ENCODE measurements at regions of chr3 and their contacts with region 1.

Region 1: DNA sequence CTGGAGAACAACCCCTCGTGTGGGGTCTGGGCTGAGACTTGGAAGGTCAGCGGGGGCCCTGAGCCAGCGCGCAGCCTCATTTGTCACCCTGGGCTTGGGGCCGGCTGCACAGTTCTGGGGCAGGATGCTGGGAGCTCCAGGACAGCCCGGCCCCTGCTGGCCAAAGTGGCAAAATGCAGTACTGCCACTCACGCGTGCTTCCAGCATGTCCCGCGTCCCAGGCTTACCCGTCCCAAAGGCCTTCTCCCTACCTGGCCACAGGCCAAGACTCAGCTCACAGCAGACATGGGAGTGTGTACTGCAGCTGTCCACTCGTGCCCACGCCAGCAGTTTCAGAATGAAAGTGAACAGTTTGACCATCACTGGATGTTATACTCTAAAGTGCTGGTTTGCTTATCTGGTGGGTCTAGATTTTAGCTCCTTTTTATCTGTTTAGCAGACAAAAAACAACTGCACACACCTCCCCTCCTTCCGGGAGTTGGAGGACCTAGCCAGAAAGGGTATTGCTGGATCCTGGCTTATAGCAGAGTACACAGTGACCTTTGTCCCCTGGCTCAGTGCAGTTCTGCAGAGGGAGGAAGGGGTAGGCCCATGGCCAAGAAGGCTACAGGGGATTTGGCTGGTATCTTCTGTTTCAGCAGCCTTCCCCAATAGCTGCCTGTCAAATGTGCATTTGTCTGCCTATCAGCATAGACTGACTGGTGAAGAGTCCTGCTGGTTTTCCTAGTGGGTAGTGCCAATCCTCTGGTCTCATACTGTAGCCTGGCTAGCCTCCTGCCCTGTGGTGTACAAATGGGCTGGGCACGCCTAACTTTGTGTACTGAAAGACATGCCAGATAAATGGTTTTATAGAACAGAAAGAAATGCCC is 23.2 kb upstream of the IP6K2 start:
- DNase-seq: peak; percentile 41 to 87
- H3K4me3 ChIP-seq: no peak overlapping the region
- H3K27ac ChIP-seq: no peak overlapping the region
- H3K4me1 ChIP-seq: peaks cover 0 to 4% (median 0%) of the 10 kb centered on the region in 4 experiments; a peak in 2 of 7 replicates
- H3K27me3 ChIP-seq: no peaks in the 10 kb centered on the region; a peak in 1 of 7 replicates
- CTCF ChIP-seq: peak; percentile 75 to 95 (median 91)
- EP300 ChIP-seq: no peak
- POLR2A ChIP-seq: no peak
- RAD21 ChIP-seq: peak; percentile 59 to 70

Region 2: GRCh38 chr3:48625600-48625999 is 114.6 kb before region 1 on chr3:
- CTCF ChIA-PET with region 1: no interaction called
- POLR2A ChIA-PET with region 1: no interaction called
- DNase-seq: no peak
- H3K4me3 ChIP-seq: no peak overlapping the region
- H3K27ac ChIP-seq: no peak overlapping the region
- H3K4me1 ChIP-seq: peaks cover 0 to 6% (median 3%) of the 10 kb centered on the region in 4 experiments; a peak in 3 of 7 replicates
- H3K27me3 ChIP-seq: no peaks in the 10 kb centered on the region
- CTCF ChIP-seq: no peak
- EP300 ChIP-seq: no peak
- POLR2A ChIP-seq: no peak
- RAD21 ChIP-seq: no peak

Region 3: GRCh38 chr3:48708481-48708889 is 31.7 kb before region 1 on chr3:
- CTCF ChIA-PET with region 1: interaction called, 9 read pairs
- POLR2A ChIA-PET with region 1: interaction called, 11 read pairs
- DNase-seq: no peak
- H3K4me3 ChIP-seq: no peak overlapping the region
- H3K27ac ChIP-seq: no peak overlapping the region; the same call in 1 of the 2 replicates
- H3K4me1 ChIP-seq: peaks cover 0 to 3% (median 3%) of the 10 kb centered on the region in 4 experiments; a peak in 2 of 7 replicates
- H3K27me3 ChIP-seq: no peaks in the 10 kb centered on the region
- CTCF ChIP-seq: no peak
- EP300 ChIP-seq: no peak
- POLR2A ChIP-seq: no peak
- RAD21 ChIP-seq: no peak

Region 4: DNA sequence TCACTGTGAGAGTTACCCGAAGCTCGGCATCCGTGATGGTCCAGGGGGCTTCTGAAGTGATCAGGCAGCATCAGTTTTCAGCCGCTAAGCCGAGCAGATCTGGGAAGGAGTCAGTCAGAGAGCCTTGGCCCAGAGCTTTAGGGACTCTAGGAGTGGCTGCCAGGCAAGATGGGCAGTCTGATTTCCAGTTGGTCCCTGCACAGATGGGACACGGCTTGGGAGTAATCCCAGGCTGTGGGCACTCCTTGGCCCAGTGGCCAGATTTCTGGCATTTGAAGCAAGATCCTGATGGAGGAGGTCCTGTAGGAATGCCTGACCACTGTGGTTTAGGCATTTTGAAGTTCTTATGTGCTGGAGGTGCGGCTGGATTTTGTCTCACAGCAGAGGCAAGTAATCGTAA is 12.7 kb before region 1 on chr3:
- CTCF ChIA-PET with region 1: interaction called, 40 read pairs
- POLR2A ChIA-PET with region 1: no interaction called
- DNase-seq: no peak
- H3K4me3 ChIP-seq: no peak overlapping the region
- H3K27ac ChIP-seq: no peak overlapping the region
- H3K4me1 ChIP-seq: no peaks in the 10 kb centered on the region
- H3K27me3 ChIP-seq: no peaks in the 10 kb centered on the region
- CTCF ChIP-seq: no peak
- EP300 ChIP-seq: no peak
- POLR2A ChIP-seq: no peak
- RAD21 ChIP-seq: no peak

Region 5: GRCh38 chr3:48765376-48765775 is 25.2 kb after region 1 on chr3:
- CTCF ChIA-PET with region 1: interaction called, 19 read pairs
- POLR2A ChIA-PET with region 1: interaction called, 3 read pairs
- DNase-seq: no peak
- H3K4me3 ChIP-seq: no peak overlapping the region
- H3K27ac ChIP-seq: no peak overlapping the region
- H3K4me1 ChIP-seq: peaks cover 0 to 7% (median 0%) of the 10 kb centered on the region in 4 experiments; a peak in 5 of 7 replicates
- H3K27me3 ChIP-seq: no peaks in the 10 kb centered on the region
- CTCF ChIP-seq: peak in 2 of 3 experiments; percentile 9 to 13; a peak in 2 of 4 replicates
- EP300 ChIP-seq: no peak
- POLR2A ChIP-seq: no peak
- RAD21 ChIP-seq: peak; percentile 43 to 44

Region 6: DNA sequence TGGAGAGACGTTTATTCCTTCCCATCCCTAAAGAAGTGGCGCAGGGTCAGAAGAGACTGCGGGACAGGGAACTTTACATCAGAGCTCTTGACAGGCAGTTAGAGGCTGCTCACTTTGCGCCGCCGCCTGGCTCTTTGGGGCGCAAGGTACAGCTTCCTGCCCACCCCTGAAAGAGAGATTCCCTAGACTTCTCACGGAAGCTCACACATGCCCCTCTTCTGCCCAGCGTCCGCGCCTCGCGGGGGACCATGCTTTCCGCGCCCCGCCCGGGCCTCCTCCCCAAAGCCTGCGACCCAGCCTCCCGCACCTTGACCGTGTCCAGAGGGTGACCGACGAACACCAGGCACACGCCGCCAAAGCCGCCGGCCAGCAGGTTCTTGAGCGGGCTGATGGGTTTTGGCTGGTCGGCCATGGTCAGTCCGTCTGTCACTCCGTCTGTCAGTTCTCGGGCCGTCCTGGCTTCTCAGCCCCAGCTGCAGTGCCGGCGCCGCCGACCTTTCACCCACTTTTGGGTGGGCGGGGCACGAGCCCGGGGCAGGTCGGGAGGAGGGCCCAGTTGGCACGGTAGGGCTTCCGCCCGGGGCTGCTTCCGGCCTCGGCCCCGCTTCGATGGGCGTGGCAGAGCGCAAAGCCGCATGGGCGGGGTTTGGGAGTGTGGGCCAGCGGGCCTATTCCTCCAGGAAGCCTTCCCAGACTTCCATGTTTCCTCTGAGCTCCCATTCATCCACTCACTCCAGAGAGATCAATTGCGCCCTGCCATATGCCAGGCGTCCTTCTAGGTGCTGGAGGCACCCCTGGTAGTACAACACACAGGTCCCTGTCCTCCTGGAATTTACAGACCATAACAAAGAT is 158.4 kb after region 1 on chr3 and contains the start of gene SLC25A20:
- CTCF ChIA-PET with region 1: interaction called, 11 read pairs
- POLR2A ChIA-PET with region 1: no interaction called
- DNase-seq: peak; percentile 85 to 95
- H3K4me3 ChIP-seq: peak within 1 kb of the TSS; percentile 71 to 83 (median 76)
- H3K27ac ChIP-seq: no peak within 1 kb of the TSS
- H3K4me1 ChIP-seq: peaks cover 0 to 6% (median 3%) of the 10 kb centered on the region in 4 experiments; a peak in 2 of 7 replicates
- H3K27me3 ChIP-seq: no peaks in the 10 kb centered on the region
- CTCF ChIP-seq: no peak
- EP300 ChIP-seq: no peak
- POLR2A ChIP-seq: peak in 1 of 2 experiments; percentile 46; a peak in 1 of 3 replicates
- RAD21 ChIP-seq: no peak
- total RNA-seq, gene SLC25A20: 3.8 and 5.1 TPM in 2 replicates

Measured in H1 (cell line).